Gastrocnemius medialis (tissue), 4 donors: ENCODE measurements at regions of chr12 and their contacts with region 1.

Region 1: DNA sequence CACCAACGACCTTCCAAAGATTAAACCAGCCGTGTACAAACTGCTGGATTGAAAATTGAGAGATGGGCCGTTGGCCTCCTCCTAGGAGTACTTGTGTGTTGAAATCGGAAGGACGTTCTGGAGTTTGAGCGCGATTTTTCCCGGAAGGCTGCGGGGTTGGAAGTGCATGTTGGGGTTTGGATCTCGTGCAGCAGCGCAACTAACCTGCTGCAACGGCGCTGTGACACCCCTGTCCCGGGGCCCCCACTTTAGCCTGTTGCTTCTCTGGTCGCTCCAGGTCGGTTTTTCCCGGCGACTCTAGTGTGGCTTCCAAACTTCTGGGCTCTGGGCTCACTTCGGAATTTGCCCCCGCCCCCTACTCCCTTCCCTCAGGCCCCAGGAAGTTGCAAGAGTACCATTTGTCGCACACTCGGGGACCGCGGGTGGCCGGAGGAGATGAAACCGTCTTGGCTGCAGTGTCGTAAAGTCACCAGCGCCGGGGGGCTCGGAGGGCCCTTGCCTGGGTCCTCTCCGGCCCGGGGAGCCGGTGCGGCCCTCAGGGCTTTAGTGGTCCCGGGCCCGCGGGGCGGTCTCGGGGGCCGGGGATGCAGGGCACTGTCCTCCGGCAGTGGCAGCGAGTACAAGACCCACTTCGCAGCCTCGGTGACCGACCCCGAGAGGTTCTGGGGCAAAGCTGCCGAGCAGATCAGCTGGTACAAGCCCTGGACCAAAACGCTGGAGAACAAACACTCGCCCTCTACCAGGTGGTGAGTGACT is at the start of gene ACSS3:
- DNase-seq: peak; percentile 5 to 58
- ATAC-seq: peak; percentile 43 to 58
- H3K4me3 ChIP-seq: peak within 1 kb of the TSS; percentile 71 to 93 (median 74)
- H3K27ac ChIP-seq: peak within 1 kb of the TSS; percentile 83 to 93 (median 88)
- H3K4me1 ChIP-seq: peaks cover 13 to 25% of the 10 kb centered on the region in 2 donors
- H3K27me3 ChIP-seq: no peaks in the 10 kb centered on the region
- CTCF ChIP-seq: no peak
- POLR2A ChIP-seq: peak in 1 of 2 donors; percentile 29
- total RNA-seq, gene ACSS3: 5.0 to 13.6 (median 7.8) TPM

Region 2: DNA sequence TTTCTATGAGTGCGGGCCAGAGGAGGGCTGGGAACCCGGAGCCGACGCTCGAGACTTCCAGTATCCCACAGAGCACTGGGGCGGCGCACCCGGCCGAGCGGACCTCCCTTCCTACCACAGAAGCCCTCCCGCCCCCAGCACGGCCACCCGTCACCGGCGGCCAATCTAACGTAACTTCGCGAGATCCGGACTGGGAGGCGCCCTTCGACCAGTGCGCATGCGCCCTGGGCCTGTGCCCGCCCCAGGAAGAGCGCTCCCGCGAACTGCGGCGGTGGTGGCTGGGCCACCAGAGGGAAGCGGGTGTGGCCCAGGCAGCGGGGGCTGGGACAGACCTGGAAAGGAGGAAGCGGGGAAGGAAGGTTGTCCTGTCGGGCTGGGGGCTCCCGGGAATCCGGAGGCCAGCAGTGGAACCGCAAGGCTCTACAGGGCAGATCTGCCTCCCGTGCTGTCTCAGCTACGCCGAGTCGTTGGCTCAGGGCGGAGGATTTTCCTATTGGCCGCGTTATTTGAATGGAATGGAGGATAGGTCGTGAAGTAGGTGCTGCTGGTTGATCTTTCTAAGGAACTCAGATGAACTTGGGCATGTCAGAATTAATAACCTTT is 1142.7 kb before region 1 on chr12 and contains the start of gene PPP1R12A:
- in situ Hi-C with region 1: no loop called
- intact Hi-C with region 1: loop called (anchors 10 kb)
- DNase-seq: peak; percentile 93 to 94
- ATAC-seq: peak; percentile 91 to 93
- H3K4me3 ChIP-seq: peak within 1 kb of the TSS; percentile 78 to 95 (median 92)
- H3K27ac ChIP-seq: peak within 1 kb of the TSS; percentile 89 to 95 (median 92)
- H3K4me1 ChIP-seq: peaks cover 27 to 40% of the 10 kb centered on the region in 2 donors
- H3K27me3 ChIP-seq: no peaks in the 10 kb centered on the region
- CTCF ChIP-seq: peak in 2 of 5 experiments; percentile 39 to 40
- POLR2A ChIP-seq: peak; percentile 92 to 95
- total RNA-seq, gene PPP1R12A: 38.0 to 65.7 (median 47.2) TPM

Region 3: DNA sequence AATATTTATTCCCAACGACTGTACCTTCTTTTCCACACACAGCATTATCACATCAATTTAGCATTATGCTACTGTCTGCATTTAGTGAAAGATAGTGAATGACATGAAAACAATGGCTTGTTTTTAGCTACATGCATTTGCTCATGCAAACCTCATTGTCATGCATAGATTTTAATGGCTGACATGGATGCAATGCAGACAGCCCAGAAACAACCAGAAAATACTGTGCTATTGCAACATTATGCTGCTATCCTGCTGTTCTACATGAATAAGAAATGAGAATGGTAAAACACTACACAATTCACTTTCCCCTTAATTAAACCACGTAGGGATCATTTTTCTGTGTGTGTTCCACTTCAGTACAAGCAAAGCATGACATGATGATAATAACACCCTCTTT is 230.9 kb before region 1 on chr12:
- in situ Hi-C with region 1: no loop called
- intact Hi-C with region 1: no loop called
- DNase-seq: no peak
- ATAC-seq: no peak
- H3K4me3 ChIP-seq: no peak overlapping the region
- H3K27ac ChIP-seq: no peak overlapping the region
- H3K4me1 ChIP-seq: no peaks in the 10 kb centered on the region
- H3K27me3 ChIP-seq: no peaks in the 10 kb centered on the region
- CTCF ChIP-seq: no peak
- POLR2A ChIP-seq: no peak

Region 4: GRCh38 chr12:80936498-80937390 is 141.1 kb before region 1 on chr12:
- in situ Hi-C with region 1: no loop called
- intact Hi-C with region 1: loop called (anchors 2 kb)
- DNase-seq: no peak
- ATAC-seq: peak; percentile 51 to 67
- H3K4me3 ChIP-seq: peak overlapping the region; percentile 68 to 90 (median 80)
- H3K27ac ChIP-seq: peak overlapping the region; percentile 72 to 77 (median 73)
- H3K4me1 ChIP-seq: peaks cover 4% of the 10 kb centered on the region in 2 donors
- H3K27me3 ChIP-seq: peaks cover 0 to 7% (median 2%) of the 10 kb centered on the region in 3 donors
- CTCF ChIP-seq: no peak
- POLR2A ChIP-seq: no peak

Region 5: DNA sequence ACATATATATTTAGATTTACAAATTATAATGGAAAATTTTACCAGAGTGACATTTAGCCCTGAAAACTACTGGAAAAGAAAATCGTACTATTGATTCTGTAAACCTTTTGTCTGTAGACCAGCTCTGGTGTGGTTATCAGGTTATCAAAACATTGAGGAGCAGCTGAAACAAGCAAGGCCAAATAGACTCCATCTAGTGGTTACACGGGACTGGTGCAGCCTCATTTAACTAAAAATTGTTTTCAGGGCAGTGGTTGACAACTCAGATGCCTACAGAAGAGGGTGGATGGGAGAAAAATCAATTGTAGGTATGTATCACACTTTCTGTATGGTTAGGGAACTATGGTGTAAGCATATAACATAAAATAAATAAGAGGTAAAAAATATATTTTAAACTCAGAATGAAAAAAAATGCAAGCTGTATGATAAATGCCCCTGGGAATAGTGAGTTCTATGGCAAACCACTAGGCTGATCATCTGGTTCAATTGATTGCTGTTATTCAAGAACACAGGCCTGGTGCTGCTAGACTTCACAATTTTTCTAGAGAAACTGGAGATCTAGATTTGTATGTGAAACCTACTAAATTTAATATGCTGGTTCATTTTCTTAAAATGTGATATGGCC is 51.2 kb after region 1 on chr12:
- in situ Hi-C with region 1: no loop called
- intact Hi-C with region 1: loop called (anchors 2 kb)
- DNase-seq: peak in 1 of 2 donors; percentile 22
- ATAC-seq: peak in 1 of 2 donors; percentile 81
- H3K4me3 ChIP-seq: no peak overlapping the region
- H3K27ac ChIP-seq: no peak overlapping the region
- H3K4me1 ChIP-seq: no peaks in the 10 kb centered on the region
- H3K27me3 ChIP-seq: no peaks in the 10 kb centered on the region
- CTCF ChIP-seq: peak; percentile 45 to 75 (median 68)
- POLR2A ChIP-seq: no peak